Activated naive CD4-positive, alpha-beta T cell treated with anti-CD3 and anti-CD28 coated beads for 36 hours (primary cell): ENCODE measurements at regions of chr19 and their contacts with region 1.

Region 1: DNA sequence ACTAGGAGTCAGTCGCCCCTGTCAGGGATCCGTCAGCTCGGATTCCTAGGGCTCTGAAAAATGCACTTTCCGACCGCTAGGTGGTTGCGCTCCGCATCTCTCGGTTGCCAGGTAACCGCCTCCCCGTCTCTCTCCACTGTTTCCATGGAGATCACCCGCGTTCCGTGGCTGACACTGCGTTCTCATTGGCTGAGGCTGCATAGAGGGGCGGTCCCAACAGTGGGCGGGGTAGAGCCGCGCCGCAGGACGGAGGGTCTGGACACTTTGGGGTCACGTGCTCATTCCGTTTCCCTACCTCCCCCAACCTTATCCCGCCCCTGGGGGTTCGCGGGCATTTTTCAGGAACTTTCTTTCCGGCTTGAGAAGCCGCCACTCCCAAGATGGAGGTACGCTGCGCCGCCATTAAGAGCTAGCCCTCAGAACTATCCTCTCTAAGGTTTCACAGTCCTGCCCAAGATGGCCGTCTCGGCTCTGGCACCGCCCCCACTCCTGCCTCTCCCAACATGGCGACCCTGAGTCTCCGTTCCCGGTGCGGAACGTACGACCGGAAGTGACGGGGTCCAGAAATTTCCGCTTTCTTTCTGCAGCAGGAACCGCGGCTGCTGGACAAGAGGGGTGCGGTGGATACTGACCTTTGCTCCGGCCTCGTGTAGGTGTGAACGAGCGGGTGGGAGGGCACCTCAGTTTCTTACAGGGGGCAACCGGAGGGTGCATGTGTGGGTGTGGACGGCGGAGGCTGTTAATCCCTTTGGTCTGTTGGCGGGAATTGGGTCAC is at the starts of genes ODAD3 and PRKCSH:
- DNase-seq: peak; percentile 99
- H3K4me3 Mint-ChIP-seq: peak within 1 kb of the TSS; percentile 100
- H3K27ac Mint-ChIP-seq: peak within 1 kb of the TSS; percentile 93
- H3K4me1 Mint-ChIP-seq: peaks cover 22% of the 10 kb centered on the region
- H3K27me3 Mint-ChIP-seq: no peaks in the 10 kb centered on the region
- total RNA-seq, gene ODAD3: 0.15 to 0.19 TPM
- total RNA-seq, gene PRKCSH: 234 to 237 TPM

Region 2: GRCh38 chr19:11155373-11156120 is 279.7 kb before region 1 on chr19 and contains the start of gene SPC24:
- CTCF ChIA-PET with region 1: no interaction called
- intact Hi-C with region 1: loop called (anchors 1 kb)
- DNase-seq: peak; percentile 97
- H3K4me3 Mint-ChIP-seq: peak within 1 kb of the TSS; percentile 80
- H3K27ac Mint-ChIP-seq: peak within 1 kb of the TSS; percentile 89
- H3K4me1 Mint-ChIP-seq: peaks cover 10% of the 10 kb centered on the region
- H3K27me3 Mint-ChIP-seq: no peaks in the 10 kb centered on the region
- total RNA-seq, gene SPC24: 94.7 to 102 TPM

Region 3: DNA sequence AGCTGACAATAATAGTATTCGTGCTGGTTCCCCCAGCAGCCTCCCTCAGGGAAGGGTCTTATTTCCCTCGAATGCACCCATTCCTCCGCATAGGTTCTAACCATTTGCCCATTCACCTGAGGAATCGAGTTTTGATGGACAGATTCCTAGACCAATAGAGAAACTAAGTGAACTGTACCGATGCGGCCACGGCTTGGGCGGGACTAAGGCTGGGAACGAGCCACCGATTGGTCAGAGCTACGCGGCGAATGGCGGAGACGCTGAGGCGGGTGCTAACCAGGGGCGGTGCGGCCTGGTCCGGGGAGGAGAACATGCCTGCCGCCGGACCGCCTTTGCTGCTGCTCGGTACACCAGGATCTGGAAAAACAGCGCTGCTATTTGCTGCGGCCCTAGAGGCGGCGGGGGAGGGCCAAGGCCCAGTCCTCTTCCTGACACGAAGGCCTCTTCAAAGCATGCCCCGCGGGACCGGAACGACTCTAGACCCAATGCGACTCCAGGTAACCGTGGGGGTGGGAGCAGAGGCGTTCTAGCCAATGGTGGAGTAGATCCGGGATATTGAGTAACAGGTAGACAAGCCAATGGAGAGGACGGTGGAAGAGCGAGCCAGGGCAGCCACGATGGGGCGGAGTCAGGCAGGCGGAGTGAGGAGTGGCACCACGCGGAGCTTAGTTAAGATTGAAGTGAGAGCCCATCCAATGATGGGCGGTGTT is 60.7 kb before region 1 on chr19 and contains the start of gene SWSAP1:
- CTCF ChIA-PET with region 1: interaction called, 5 read pairs
- intact Hi-C with region 1: loop called (anchors 1 kb)
- DNase-seq: peak; percentile 99
- H3K4me3 Mint-ChIP-seq: no peak within 1 kb of the TSS
- H3K27ac Mint-ChIP-seq: no peak within 1 kb of the TSS
- H3K4me1 Mint-ChIP-seq: peaks cover 35% of the 10 kb centered on the region
- H3K27me3 Mint-ChIP-seq: no peaks in the 10 kb centered on the region
- total RNA-seq, gene SWSAP1: 1.1 to 2.1 TPM

Region 4: DNA sequence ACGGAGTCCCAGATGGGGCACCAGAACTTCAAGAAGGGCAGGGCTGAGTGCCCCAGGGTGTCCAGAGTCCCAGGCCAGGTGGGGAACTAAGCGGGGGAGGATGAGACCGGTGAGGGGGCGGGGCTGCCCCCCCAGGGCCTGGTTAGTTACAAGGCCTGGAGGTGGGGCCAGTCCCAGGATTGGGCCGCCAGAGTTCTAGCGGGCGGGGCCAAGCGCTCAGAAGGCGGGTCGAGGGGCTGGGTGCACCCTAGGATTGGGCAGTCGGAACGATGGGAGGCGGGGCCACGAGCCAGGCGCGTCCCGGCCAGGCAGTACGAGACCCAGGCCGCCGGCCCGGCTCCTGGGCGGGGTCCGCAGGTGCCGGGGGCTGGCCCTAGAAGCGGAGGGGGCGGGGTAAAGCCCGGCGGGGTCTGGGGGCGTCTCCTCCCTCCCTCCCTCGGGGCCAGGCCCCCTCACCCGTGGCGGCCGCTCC is 69.8 kb after region 1 on chr19:
- CTCF ChIA-PET with region 1: no interaction called
- intact Hi-C with region 1: loop called (anchors 1 kb)
- DNase-seq: peak; percentile 95
- H3K4me3 Mint-ChIP-seq: peak overlapping the region; percentile 86
- H3K27ac Mint-ChIP-seq: peak overlapping the region; percentile 36
- H3K4me1 Mint-ChIP-seq: peaks cover 15% of the 10 kb centered on the region
- H3K27me3 Mint-ChIP-seq: no peaks in the 10 kb centered on the region